ENCODE measurements at regions of chr2 and their contacts with region 1.

Region 1: DNA sequence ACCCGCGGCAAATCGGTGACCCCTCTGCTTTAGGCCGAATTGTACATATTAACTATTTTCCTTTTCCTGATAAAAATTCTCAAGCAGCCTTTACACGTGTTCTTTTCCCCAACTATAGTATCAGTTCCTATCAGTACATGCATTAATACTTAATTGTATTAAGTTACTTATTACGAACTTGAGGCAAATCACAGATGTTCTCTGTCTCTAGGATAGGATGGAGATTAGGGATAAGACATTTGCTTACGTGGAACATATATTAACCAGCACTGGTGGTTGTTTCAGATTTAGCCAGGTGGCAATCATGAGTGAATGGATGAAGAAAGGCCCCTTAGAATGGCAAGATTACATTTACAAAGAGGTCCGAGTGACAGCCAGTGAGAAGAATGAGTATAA is 675 bp downstream of the GEMIN6 start:
- DNase-seq: no peak
- ATAC-seq: no peak
- H3K4me3 ChIP-seq: peak overlapping the region; percentile 52 to 95 (median 81)
- H3K4me3 Mint-ChIP-seq: peak overlapping the region; percentile 98
- H3K27ac ChIP-seq: peak overlapping the region; percentile 31 to 82
- H3K27ac Mint-ChIP-seq: peak overlapping the region; percentile 95
- H3K4me1 ChIP-seq: peaks cover 6 to 10% of the 10 kb centered on the region in 2 donors
- H3K4me1 Mint-ChIP-seq: peaks cover 11% of the 10 kb centered on the region
- H3K27me3 ChIP-seq: peaks cover 0 to 3% (median 0%) of the 10 kb centered on the region in 4 experiments
- H3K27me3 Mint-ChIP-seq: peaks cover 17% of the 10 kb centered on the region
- CTCF ChIP-seq: no peak

Region 2: DNA sequence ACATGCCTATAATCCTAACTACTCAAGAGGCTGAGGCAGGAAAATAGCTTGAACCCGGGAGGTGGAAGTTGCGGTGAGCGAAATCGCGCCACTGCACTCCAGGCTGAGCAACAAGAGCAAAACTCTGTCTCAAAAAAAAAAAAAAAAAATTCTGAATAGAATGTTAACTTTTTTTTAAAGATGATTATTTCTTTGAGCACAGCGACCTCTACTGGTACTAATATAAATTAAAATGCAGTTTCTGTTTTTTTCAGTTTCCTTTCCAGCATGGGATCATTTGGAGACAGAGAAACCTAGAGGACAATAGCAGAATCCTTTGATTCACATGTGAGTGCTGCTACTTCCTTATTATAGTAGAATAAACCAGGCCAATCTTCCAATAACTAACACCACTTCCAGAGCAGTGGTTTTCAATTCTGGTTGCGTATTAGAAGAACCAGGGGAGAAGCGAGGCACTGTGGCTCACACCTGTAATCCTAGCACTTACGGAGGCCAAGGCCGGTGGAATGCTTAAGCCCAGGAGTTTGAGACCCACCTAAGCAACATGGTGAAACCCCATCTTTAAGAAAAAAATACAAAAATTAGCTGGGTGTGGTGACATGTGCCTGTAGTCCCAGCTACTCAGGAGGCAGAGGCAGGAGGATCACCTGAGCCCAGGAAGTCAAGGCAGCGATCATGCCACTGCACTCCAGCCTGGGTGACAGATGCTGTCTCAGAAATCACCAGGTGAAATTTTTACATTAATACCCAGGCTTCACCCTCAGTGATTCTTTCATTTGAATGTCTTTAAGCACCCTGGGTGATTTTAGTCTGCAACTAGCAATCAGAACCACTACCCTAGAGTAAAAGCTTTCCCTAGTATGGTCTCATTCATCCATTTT is 37.6 kb before region 1 on chr2:
- CTCF ChIA-PET with region 1: no interaction called
- POLR2A ChIA-PET with region 1: no interaction called
- intact Hi-C with region 1: no loop called
- DNase-seq: peak; percentile 69
- ATAC-seq: peak; percentile 16
- H3K4me3 ChIP-seq: no peak overlapping the region
- H3K4me3 Mint-ChIP-seq: no peak overlapping the region
- H3K27ac ChIP-seq: peak overlapping the region in 1 of 2 donors; percentile 4
- H3K27ac Mint-ChIP-seq: peak overlapping the region; percentile 50
- H3K4me1 ChIP-seq: no peaks in the 10 kb centered on the region
- H3K4me1 Mint-ChIP-seq: peaks cover 24% of the 10 kb centered on the region
- H3K27me3 ChIP-seq: no peaks in the 10 kb centered on the region
- H3K27me3 Mint-ChIP-seq: no peaks in the 10 kb centered on the region
- CTCF ChIP-seq: peak; percentile 80

Region 3: DNA sequence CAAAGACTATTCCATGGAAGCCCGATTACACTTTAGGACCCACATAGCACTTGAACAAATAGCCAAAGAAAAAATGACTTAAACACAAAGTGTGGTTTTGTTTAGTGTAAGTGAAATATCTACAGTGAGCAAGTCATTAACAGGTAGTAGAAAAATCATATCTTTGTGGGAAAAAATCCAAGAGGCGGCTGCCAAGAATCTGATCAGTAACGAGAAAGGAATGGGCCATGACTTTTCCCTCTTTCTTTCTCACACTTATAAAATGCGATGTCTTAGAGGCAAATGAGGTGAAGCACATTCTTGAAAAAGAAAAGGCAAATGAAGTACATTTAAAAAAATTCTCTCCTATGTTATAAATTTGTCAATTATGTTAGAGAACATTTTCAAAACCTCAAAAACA is 13.5 kb before region 1 on chr2:
- CTCF ChIA-PET with region 1: no interaction called
- POLR2A ChIA-PET with region 1: no interaction called
- intact Hi-C with region 1: no loop called
- DNase-seq: no peak
- ATAC-seq: no peak
- H3K4me3 ChIP-seq: no peak overlapping the region
- H3K4me3 Mint-ChIP-seq: no peak overlapping the region
- H3K27ac ChIP-seq: no peak overlapping the region
- H3K27ac Mint-ChIP-seq: no peak overlapping the region
- H3K4me1 ChIP-seq: no peaks in the 10 kb centered on the region
- H3K4me1 Mint-ChIP-seq: no peaks in the 10 kb centered on the region
- H3K27me3 ChIP-seq: no peaks in the 10 kb centered on the region
- H3K27me3 Mint-ChIP-seq: no peaks in the 10 kb centered on the region
- CTCF ChIP-seq: no peak

Region 4: DNA sequence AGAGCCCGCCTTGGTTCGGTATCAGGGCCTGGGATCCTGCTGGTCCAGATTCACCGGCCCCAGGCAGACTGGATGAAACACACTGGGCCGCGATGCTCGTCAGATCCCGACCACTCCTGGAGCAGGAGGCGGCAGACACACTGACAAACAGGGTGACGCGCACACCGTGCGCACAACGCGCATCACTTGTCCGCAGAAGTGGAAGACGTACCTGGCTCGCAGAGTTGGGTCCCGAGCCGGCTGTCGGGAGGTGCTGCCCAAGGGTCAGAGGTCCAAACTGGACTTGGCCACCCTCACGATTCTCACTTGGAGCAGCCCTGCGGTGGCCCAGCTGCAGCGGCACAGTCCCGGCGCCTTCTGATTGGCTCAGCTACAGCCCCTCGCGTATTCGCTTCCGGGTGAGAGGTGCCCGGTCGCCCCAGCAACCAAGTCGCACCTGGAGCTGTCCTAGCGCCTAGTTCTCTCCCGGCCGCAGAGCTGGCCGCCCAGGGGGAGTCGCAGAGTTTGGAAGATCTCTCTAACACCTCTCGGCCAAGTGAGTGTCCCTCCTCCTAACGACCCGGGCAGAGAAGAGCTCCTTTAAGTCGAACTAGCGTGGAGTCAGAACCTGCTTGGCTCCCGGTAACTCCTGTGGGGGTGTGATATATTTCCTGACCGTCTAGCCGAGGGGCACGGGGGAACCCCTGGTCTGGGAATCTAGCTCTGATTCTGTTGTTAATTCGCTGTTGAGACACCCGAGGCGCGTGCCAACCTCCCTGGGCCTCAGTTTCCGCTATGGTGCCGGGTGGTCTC is 97.1 kb after region 1 on chr2 and contains the starts of genes DHX57 and MORN2:
- CTCF ChIA-PET with region 1: no interaction called
- POLR2A ChIA-PET with region 1: no interaction called
- intact Hi-C with region 1: loop called (anchors 1 kb)
- DNase-seq: peak; percentile 84
- ATAC-seq: peak; percentile 95
- H3K4me3 ChIP-seq: peak within 1 kb of the TSS; percentile 70 to 84 (median 83)
- H3K4me3 Mint-ChIP-seq: peak within 1 kb of the TSS; percentile 97
- H3K27ac ChIP-seq: peak within 1 kb of the TSS; percentile 42 to 63
- H3K27ac Mint-ChIP-seq: peak within 1 kb of the TSS; percentile 88
- H3K4me1 ChIP-seq: peaks cover 12 to 18% of the 10 kb centered on the region in 2 donors
- H3K4me1 Mint-ChIP-seq: peaks cover 25% of the 10 kb centered on the region
- H3K27me3 ChIP-seq: no peaks in the 10 kb centered on the region
- H3K27me3 Mint-ChIP-seq: no peaks in the 10 kb centered on the region
- CTCF ChIP-seq: no peak
- total RNA-seq, gene DHX57: 24.1 and 25.0 TPM in 2 replicates
- total RNA-seq, gene MORN2: 2.3 and 3.9 TPM in 2 replicates